ENCODE measurements at regions of chr2 and their contacts with region 1.

Region 1: GRCh38 chr2:74587664-74588277 is 33.3 kb downstream of the DOK1 start:
- DNase-seq: peak; percentile 51
- H3K4me3 ChIP-seq: no peak overlapping the region
- H3K27ac ChIP-seq: no peak overlapping the region
- H3K4me1 ChIP-seq: peaks cover 15% of the 10 kb centered on the region
- H3K27me3 ChIP-seq: no peaks in the 10 kb centered on the region
- CTCF ChIP-seq: peak; percentile 72 to 74

Region 2: DNA sequence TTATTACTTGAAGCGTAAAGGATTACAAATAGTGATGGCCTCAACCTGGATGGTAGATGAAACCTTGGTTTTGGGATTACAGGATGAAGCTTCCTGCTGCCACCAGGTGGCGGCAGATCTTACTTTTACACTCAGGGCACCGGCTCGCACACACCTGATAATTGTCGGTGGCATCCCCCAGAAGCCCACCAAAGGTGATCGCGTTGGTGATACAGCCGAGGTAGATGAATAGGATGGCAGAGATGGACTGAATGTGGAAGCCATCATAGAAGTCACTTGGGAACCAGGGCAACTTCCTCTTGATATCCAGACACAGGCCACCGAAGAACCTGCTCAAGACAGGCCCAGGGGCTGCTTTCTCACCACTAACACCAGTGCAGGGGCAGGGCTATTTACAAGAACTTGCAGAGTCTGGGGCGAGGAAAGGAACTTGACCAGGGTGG is 337.6 kb before region 1 on chr2:
- CTCF ChIA-PET with region 1: no interaction called
- dilution Hi-C with region 1: no loop called
- in situ Hi-C with region 1: no loop called
- intact Hi-C with region 1: loop called (anchors 2 kb)
- DNase-seq: peak; percentile 9
- H3K4me3 ChIP-seq: no peak overlapping the region
- H3K27ac ChIP-seq: no peak overlapping the region
- H3K4me1 ChIP-seq: no peaks in the 10 kb centered on the region
- H3K27me3 ChIP-seq: no peaks in the 10 kb centered on the region
- CTCF ChIP-seq: peak; percentile 71 to 80

Region 3: DNA sequence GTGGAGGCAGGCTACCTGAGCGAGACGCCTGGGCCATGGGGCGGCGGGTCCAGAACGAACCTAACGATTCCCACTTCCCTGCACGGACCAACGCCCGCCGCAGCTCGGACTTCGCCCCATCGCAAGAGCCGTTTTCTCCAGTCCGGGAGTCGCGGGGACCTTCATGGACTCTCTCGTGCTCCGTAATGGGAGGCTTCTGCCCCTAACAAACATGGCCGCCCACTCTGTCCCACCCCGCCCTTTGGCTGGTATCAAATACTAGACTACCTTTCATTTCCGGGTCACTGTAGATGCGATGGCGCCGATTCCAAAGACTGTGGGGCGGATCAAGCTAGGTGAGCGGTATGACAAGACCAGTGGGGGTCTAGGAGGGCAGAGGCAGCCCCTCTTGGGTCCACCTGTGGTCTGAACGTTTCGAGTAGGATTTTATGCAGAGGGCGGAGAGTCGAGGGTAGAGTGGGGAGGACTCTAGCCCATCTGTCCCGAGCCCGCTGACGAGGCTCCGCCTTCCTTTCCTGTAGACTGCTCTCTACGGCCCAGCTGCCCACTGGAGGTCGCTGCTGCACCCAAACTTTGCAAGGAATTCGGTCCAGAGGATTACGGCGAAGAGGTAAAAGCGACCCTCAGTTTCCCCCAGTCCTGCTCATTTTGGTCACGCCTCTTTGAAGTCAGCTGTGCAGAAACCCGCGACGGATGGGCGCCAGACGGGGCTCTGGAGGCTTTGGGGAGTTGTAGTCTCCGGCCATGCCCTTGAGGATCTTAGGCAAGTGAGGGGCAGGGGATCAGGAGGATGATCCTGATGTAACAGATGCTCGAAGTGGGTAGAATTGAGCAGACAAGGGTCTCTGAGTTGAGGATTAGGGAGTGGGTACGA is 104.7 kb before region 1 on chr2 and contains the starts of genes CCDC142 and TTC31:
- CTCF ChIA-PET with region 1: no interaction called
- dilution Hi-C with region 1: no loop called
- in situ Hi-C with region 1: loop called (anchors 5 to 10 kb)
- intact Hi-C with region 1: loop called (anchors 1 kb)
- DNase-seq: peak; percentile 94
- H3K4me3 ChIP-seq: peak within 1 kb of the TSS; percentile 59 to 75 (median 75)
- H3K27ac ChIP-seq: peak within 1 kb of the TSS; percentile 71
- H3K4me1 ChIP-seq: peaks cover 27% of the 10 kb centered on the region
- H3K27me3 ChIP-seq: no peaks in the 10 kb centered on the region
- CTCF ChIP-seq: peak; percentile 91 to 94
- total RNA-seq, gene CCDC142: 13.0 to 18.2 TPM
- total RNA-seq, gene TTC31: 11.5 to 22.0 TPM

Region 4: GRCh38 chr2:74529357-74530238 is 58.2 kb before region 1 on chr2 and contains the starts of genes AUP1 and HTRA2:
- CTCF ChIA-PET with region 1: interaction called, 11 read pairs
- dilution Hi-C with region 1: no loop called
- in situ Hi-C with region 1: no loop called
- intact Hi-C with region 1: loop called (anchors 1 kb)
- DNase-seq: peak; percentile 100
- H3K4me3 ChIP-seq: peak within 1 kb of the TSS; percentile 58 to 81 (median 66)
- H3K27ac ChIP-seq: peak within 1 kb of the TSS; percentile 79
- H3K4me1 ChIP-seq: peaks cover 38% of the 10 kb centered on the region
- H3K27me3 ChIP-seq: no peaks in the 10 kb centered on the region
- CTCF ChIP-seq: no peak
- total RNA-seq, gene AUP1: 67.5 to 111 TPM
- total RNA-seq, gene HTRA2: 29.2 to 30.8 TPM

Region 5: GRCh38 chr2:74548900-74549826 is 38.6 kb before region 1 on chr2:
- CTCF ChIA-PET with region 1: no interaction called
- dilution Hi-C with region 1: loop called (anchors 5 kb)
- in situ Hi-C with region 1: no loop called
- intact Hi-C with region 1: loop called (anchors 1 kb)
- DNase-seq: peak; percentile 57
- H3K4me3 ChIP-seq: peak overlapping the region; percentile 68 to 82 (median 76)
- H3K27ac ChIP-seq: peak overlapping the region; percentile 33
- H3K4me1 ChIP-seq: peaks cover 18% of the 10 kb centered on the region
- H3K27me3 ChIP-seq: no peaks in the 10 kb centered on the region
- CTCF ChIP-seq: no peak

Region 6: GRCh38 chr2:74567881-74568280 is 19.9 kb before region 1 on chr2:
- CTCF ChIA-PET with region 1: no interaction called
- dilution Hi-C with region 1: no loop called
- in situ Hi-C with region 1: no loop called
- intact Hi-C with region 1: loop called (anchors 2 kb)
- DNase-seq: peak; percentile 82
- H3K4me3 ChIP-seq: no peak overlapping the region
- H3K27ac ChIP-seq: peak overlapping the region; percentile 82
- H3K4me1 ChIP-seq: peaks cover 56% of the 10 kb centered on the region
- H3K27me3 ChIP-seq: no peaks in the 10 kb centered on the region
- CTCF ChIP-seq: no peak

Region 7: GRCh38 chr2:74619651-74620297 is 32.0 kb after region 1 on chr2:
- CTCF ChIA-PET with region 1: no interaction called
- dilution Hi-C with region 1: no loop called
- in situ Hi-C with region 1: no loop called
- intact Hi-C with region 1: no loop called
- DNase-seq: no peak
- H3K4me3 ChIP-seq: no peak overlapping the region
- H3K27ac ChIP-seq: no peak overlapping the region
- H3K4me1 ChIP-seq: no peaks in the 10 kb centered on the region
- H3K27me3 ChIP-seq: peaks cover 4% of the 10 kb centered on the region
- CTCF ChIP-seq: no peak

Region 8: GRCh38 chr2:74632209-74632938 is 44.6 kb after region 1 on chr2:
- CTCF ChIA-PET with region 1: no interaction called
- dilution Hi-C with region 1: loop called (anchors 5 kb)
- in situ Hi-C with region 1: no loop called
- intact Hi-C with region 1: no loop called
- DNase-seq: no peak
- H3K4me3 ChIP-seq: no peak overlapping the region
- H3K27ac ChIP-seq: no peak overlapping the region
- H3K4me1 ChIP-seq: no peaks in the 10 kb centered on the region
- H3K27me3 ChIP-seq: no peaks in the 10 kb centered on the region
- CTCF ChIP-seq: no peak

Region 9: GRCh38 chr2:74696829-74697228 is 109.1 kb after region 1 on chr2:
- CTCF ChIA-PET with region 1: no interaction called
- dilution Hi-C with region 1: no loop called
- in situ Hi-C with region 1: no loop called
- intact Hi-C with region 1: no loop called
- DNase-seq: no peak
- H3K4me3 ChIP-seq: no peak overlapping the region
- H3K27ac ChIP-seq: no peak overlapping the region
- H3K4me1 ChIP-seq: peaks cover 10% of the 10 kb centered on the region
- H3K27me3 ChIP-seq: no peaks in the 10 kb centered on the region
- CTCF ChIP-seq: no peak

Region 10: DNA sequence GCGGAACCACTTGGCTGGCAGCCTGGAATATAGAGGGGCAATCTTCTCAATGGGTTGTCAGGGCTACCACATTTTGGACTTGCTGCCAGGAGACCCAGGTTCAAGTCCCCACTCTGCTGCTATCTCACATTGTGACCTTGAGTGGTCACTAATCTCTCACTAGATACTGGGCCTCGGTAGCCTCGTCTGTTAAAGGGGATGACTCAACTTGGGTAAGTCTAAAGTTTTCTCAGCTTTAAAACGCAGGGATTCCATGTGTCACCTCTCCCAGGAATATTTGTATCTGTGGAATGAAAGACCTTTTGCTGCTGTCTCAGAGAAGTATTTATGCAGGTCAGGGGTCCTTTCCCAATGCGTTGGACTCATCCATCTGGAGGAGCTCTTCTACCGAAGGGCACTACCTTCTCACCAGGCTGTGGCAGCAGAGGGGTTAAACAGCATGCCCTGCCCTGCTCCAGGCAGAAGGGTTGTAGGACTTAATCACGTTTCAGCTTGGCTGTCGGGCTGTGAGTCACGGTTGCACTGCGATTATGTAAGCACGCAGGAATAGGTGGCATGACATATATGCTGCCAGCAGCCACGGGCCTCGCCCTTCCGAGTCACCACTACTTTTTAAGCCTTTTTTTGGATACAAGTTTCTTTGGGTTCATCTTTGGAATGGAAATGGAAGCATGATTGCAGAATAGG is 152.8 kb after region 1 on chr2:
- CTCF ChIA-PET with region 1: no interaction called
- dilution Hi-C with region 1: no loop called
- in situ Hi-C with region 1: no loop called
- intact Hi-C with region 1: no loop called
- DNase-seq: peak; percentile 98
- H3K4me3 ChIP-seq: no peak overlapping the region
- H3K27ac ChIP-seq: peak overlapping the region; percentile 90
- H3K4me1 ChIP-seq: peaks cover 31% of the 10 kb centered on the region
- H3K27me3 ChIP-seq: no peaks in the 10 kb centered on the region
- CTCF ChIP-seq: peak in 1 of 2 donors; percentile 29

Region 11: DNA sequence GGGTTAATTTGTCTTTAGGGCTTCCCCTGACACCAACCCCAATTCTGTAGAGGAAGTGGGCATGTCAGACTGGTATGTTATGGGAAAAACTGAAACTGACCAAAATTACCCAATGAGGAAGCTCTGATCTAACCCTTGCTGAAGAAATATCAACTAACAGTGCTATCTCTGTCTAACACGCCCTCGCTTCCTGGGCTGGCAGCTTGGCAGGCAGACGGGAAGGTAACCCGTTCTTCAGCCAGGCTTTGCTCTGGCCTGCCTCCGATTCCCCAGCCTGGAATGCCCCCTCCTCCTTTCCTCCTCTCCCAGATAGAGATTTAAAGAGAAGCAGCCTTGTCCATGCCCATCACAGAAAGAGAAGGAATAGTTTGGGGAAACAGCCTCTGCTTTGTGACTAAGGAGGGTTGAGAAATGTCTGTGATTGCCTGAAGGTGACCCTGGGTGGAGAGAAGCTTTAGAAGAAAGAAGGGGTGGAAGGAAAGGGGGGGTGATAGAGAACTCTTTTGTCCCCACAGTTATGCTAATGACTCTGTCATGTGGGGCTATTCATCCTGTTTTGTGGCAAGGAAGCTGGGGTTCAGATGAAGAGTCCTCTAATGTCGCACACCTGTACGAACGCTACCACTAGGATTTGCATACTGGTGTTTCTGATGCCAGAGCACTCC is 261.6 kb after region 1 on chr2:
- CTCF ChIA-PET with region 1: no interaction called
- dilution Hi-C with region 1: no loop called
- in situ Hi-C with region 1: no loop called
- intact Hi-C with region 1: no loop called
- DNase-seq: peak; percentile 86
- H3K4me3 ChIP-seq: no peak overlapping the region
- H3K27ac ChIP-seq: peak overlapping the region; percentile 62
- H3K4me1 ChIP-seq: peaks cover 85% of the 10 kb centered on the region
- H3K27me3 ChIP-seq: no peaks in the 10 kb centered on the region
- CTCF ChIP-seq: no peak